H1 (cell line): ENCODE measurements at regions of chr2 and their contacts with region 1.

Region 1: DNA sequence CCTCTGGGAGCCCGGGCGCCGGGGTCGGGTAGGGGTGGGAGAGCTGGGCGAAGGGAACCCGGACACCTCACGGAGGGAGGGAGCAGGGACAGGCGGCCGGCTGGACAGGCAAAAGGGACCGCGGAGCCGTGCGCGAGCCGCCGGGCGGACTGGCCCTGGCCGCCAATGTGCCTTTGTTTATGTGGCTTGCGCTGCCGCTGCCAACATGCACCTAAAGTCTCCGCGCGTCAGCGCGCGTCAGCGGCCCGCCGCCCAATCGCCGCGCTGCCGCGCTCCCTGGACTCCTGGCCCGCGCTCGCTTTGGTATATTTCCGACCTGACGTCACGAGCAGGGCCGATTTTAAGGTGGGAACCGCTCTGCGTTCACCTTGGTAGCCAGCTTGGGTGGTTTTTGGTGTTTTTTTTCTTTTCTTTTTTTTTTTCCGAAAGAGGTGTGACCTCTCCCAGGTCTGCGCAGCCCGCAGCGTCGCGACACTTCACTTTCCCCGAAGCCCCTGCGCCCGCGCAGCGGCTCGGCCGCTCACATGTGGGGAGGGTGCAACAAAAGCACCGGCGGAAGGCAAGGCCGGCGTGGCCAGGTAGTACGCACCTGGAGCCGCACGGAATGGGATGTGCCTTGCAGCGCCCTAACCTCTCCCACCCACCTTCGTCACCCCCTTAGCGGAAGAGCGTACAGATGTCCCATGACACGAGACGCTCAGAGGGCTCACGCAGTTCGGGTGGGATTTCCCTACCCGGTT is at the start of gene NR4A2:
- DNase-seq: peak in 1 of 2 experiments; percentile 86
- H3K4me3 ChIP-seq: peak within 1 kb of the TSS; percentile 56 to 80 (median 68)
- H3K27ac ChIP-seq: no peak within 1 kb of the TSS
- H3K4me1 ChIP-seq: peaks cover 0 to 23% (median 13%) of the 10 kb centered on the region in 4 experiments; a peak in 6 of 7 replicates
- H3K27me3 ChIP-seq: peaks cover 40 to 62% (median 53%) of the 10 kb centered on the region in 4 experiments
- CTCF ChIP-seq: no peak
- EP300 ChIP-seq: no peak; a peak in 1 of 3 replicates
- POLR2A ChIP-seq: peak in 1 of 2 experiments; percentile 60; a peak in 2 of 3 replicates
- RAD21 ChIP-seq: no peak; a peak in 1 of 4 replicates
- total RNA-seq, gene NR4A2: 1.4 and 1.7 TPM in 2 replicates

Region 2: DNA sequence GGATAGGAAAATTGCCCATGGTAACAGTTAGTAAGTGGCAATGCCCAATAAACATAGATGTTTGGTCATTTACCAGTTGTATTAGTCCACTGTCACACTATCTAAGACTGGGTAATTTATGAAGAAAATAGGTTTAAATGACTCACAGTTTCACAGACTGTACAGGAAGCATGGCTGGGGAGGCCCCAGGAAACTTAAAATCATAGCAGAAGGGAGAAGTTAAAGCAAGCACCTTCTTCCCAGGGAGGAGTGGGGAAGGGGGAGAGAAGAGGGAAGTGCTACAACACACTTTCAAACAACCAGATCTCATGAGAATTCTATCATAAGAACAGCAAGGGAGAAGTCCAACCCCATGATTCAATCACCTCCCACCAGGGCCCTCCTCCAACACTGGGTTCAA is 23.5 kb before region 1 on chr2:
- CTCF ChIA-PET with region 1: no interaction called
- POLR2A ChIA-PET with region 1: no interaction called
- DNase-seq: no peak
- H3K4me3 ChIP-seq: no peak overlapping the region
- H3K27ac ChIP-seq: no peak overlapping the region
- H3K4me1 ChIP-seq: no peaks in the 10 kb centered on the region
- H3K27me3 ChIP-seq: no peaks in the 10 kb centered on the region
- CTCF ChIP-seq: no peak
- EP300 ChIP-seq: no peak
- POLR2A ChIP-seq: no peak
- RAD21 ChIP-seq: no peak

Region 3: GRCh38 chr2:156319811-156320485 is 12.8 kb before region 1 on chr2:
- CTCF ChIA-PET with region 1: interaction called, 17 read pairs
- POLR2A ChIA-PET with region 1: interaction called, 15 read pairs
- DNase-seq: peak in 1 of 2 experiments; percentile 80
- H3K4me3 ChIP-seq: peak overlapping the region; percentile 27 to 61 (median 40); a peak in 7 of 8 replicates
- H3K27ac ChIP-seq: no peak overlapping the region
- H3K4me1 ChIP-seq: peaks cover 2 to 9% (median 7%) of the 10 kb centered on the region in 4 experiments; a peak in 6 of 7 replicates
- H3K27me3 ChIP-seq: peaks cover 44 to 71% (median 62%) of the 10 kb centered on the region in 4 experiments
- CTCF ChIP-seq: peak; percentile 42 to 63 (median 55)
- EP300 ChIP-seq: 0 out of 3 replicates have a peak, but pooled peaks of 1 of the 2 experiments have one; percentile 16
- POLR2A ChIP-seq: no peak
- RAD21 ChIP-seq: peak; percentile 35 to 38; a peak in 3 of 4 replicates

Region 4: GRCh38 chr2:156343940-156344301 is 11.2 kb after region 1 on chr2:
- CTCF ChIA-PET with region 1: interaction called, 20 read pairs
- POLR2A ChIA-PET with region 1: interaction called, 9 read pairs
- DNase-seq: no peak
- H3K4me3 ChIP-seq: no peak overlapping the region
- H3K27ac ChIP-seq: no peak overlapping the region
- H3K4me1 ChIP-seq: no peaks in the 10 kb centered on the region; a peak in 1 of 7 replicates
- H3K27me3 ChIP-seq: peaks cover 1 to 12% (median 7%) of the 10 kb centered on the region in 4 experiments; a peak in 4 of 7 replicates
- CTCF ChIP-seq: no peak
- EP300 ChIP-seq: no peak
- POLR2A ChIP-seq: no peak
- RAD21 ChIP-seq: no peak

Region 5: DNA sequence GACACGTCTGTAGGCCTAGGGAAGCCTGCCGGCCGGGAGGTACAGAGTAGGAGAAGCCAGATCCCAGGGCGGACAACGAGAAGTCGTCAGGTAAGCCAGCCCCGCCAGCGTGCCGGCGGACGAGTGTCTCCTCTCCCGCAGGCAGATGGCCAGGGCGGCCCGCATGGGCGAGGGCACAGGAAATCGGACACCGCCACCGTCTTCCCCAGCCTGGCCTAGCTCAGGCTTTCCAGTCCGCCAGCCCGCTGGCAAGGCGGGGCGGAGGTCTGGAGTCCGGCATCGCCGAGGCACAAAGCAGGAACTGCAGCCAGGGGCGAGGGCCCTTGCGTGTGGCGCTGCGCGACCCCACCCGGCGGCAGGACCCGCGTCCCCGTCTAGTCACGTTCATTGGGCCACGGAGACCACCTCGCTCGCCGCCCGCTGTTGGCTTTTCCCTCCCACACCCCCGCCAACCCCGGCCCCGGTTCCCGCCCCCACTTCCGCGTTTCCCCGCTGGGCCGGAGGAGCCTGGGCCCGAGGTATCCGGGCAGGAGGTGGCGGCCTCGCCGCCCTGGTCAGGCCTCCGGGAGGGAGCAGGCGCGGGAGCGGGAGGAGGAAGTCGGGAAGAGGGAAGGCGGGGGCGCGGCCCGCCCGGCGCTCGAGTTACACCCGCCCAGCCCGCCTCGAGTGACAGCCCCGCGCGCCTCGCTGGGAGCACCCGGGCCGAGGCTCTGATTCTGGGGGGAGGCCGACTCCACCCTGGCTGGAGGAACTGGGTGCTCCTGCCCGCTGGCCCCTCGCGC is 103.2 kb after region 1 on chr2 and contains the start of gene GPD2:
- CTCF ChIA-PET with region 1: interaction called, 17 read pairs
- POLR2A ChIA-PET with region 1: no interaction called
- DNase-seq: peak; percentile 57 to 90
- H3K4me3 ChIP-seq: peak within 1 kb of the TSS; percentile 58 to 76 (median 70)
- H3K27ac ChIP-seq: peak within 1 kb of the TSS; percentile 88
- H3K4me1 ChIP-seq: peaks cover 0 to 5% (median 3%) of the 10 kb centered on the region in 4 experiments; a peak in 4 of 7 replicates
- H3K27me3 ChIP-seq: no peaks in the 10 kb centered on the region
- CTCF ChIP-seq: peak in 1 of 3 experiments; percentile 1; a peak in 1 of 4 replicates
- EP300 ChIP-seq: no peak
- POLR2A ChIP-seq: peak; percentile 53 to 89
- RAD21 ChIP-seq: 0 out of 4 replicates have a peak, but pooled peaks of 1 of the 2 experiments have one; percentile 16
- total RNA-seq, gene GPD2: 43.1 and 43.6 TPM in 2 replicates

Region 6: GRCh38 chr2:156589381-156590079 is 256.8 kb after region 1 on chr2:
- CTCF ChIA-PET with region 1: interaction called, 13 read pairs
- POLR2A ChIA-PET with region 1: no interaction called
- DNase-seq: no peak
- H3K4me3 ChIP-seq: no peak overlapping the region
- H3K27ac ChIP-seq: no peak overlapping the region
- H3K4me1 ChIP-seq: peaks cover 0 to 14% (median 10%) of the 10 kb centered on the region in 4 experiments; a peak in 5 of 7 replicates
- H3K27me3 ChIP-seq: no peaks in the 10 kb centered on the region
- CTCF ChIP-seq: peak in 2 of 3 experiments; percentile 42 to 51; a peak in 2 of 4 replicates
- EP300 ChIP-seq: no peak
- POLR2A ChIP-seq: no peak
- RAD21 ChIP-seq: peak; percentile 80 to 82

Region 7: DNA sequence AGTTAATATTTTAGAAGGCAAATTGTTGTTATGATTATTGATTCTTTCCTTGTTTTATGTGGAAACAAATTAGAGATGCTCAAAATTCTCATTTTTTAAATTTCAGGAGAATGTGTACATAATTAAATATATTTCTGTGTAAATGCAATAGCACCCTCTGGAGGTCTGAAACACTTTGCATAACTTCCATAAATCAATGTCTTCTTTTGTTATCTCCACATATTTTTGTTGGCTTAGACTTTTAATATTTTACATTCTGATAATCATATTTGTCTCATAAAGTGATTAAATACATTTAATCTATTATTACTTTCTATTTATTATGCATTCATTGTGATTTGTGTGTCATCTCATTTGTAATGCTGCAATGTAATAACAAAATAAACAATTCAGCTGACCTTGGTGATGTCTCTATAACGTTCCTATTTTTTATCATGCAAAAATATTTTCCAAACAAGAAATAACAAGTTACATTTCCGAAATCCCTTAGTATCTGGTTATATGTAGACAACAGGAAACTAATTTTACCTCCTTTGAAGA is 723.0 kb after region 1 on chr2:
- CTCF ChIA-PET with region 1: no interaction called
- POLR2A ChIA-PET with region 1: no interaction called
- DNase-seq: no peak
- H3K4me3 ChIP-seq: no peak overlapping the region
- H3K27ac ChIP-seq: no peak overlapping the region
- H3K4me1 ChIP-seq: no peaks in the 10 kb centered on the region
- H3K27me3 ChIP-seq: no peaks in the 10 kb centered on the region
- CTCF ChIP-seq: no peak
- EP300 ChIP-seq: no peak
- POLR2A ChIP-seq: no peak
- RAD21 ChIP-seq: peak in 1 of 2 experiments; percentile 36; a peak in 2 of 4 replicates